B cell (primary cell): ENCODE measurements at regions of chr12 and their contacts with region 1.

Region 1: DNA sequence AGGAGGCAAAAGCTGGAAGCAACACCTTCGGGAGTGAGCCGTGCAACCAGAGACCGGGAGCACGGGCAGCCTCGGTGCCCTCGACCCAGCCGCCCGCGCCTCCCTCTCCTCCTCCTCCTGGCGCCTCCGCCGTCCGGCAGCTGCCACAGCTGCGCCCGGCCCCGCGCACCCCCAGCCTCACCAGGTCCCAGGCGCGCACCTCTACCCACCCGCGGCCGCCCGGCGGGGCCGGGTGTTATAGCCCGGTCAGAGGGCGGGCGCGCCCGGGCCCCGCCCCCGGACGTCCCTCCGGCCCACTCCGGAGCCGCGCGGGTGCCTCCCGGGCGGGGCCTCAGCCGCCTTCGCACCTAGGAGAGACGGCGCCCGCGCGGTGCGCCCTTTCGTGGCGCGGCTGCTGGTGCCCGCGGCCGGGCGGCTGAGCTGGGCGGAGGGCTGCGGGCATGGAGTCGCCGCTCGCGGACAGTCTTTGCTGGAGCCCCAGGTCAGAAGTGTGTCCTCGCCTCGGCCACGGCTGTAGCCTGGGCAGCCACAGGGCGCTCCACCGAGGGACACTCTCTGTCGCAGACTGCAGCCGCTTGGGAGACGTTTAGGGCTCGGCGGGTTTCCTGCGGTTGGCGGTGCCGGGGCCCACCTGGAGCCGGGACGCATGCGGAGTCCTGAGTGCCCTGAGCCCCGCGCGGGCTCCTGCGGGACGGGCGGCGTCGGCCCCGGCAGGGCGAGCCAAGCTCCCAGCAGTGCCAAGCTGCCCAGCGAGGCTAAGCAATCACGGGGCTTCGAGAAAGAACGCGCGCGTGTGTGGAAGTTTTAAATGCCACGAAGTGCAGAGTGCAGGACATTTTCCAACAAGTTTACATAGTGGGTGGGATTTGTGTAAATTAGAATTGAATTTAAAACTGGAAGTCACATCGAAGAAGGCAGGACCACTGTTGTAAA is at the start of gene CPM:
- DNase-seq: peak; percentile 81
- ATAC-seq: peak; percentile 98
- H3K4me3 ChIP-seq: peak within 1 kb of the TSS; percentile 66 to 95 (median 72)
- H3K4me3 Mint-ChIP-seq: peak within 1 kb of the TSS; percentile 95
- H3K27ac ChIP-seq: peak within 1 kb of the TSS in 1 of 2 donors; percentile 18
- H3K27ac Mint-ChIP-seq: peak within 1 kb of the TSS; percentile 56
- H3K4me1 ChIP-seq: peaks cover 11 to 16% of the 10 kb centered on the region in 2 donors
- H3K4me1 Mint-ChIP-seq: peaks cover 10% of the 10 kb centered on the region
- H3K27me3 ChIP-seq: peaks cover 0 to 5% (median 2%) of the 10 kb centered on the region in 4 experiments
- H3K27me3 Mint-ChIP-seq: no peaks in the 10 kb centered on the region
- CTCF ChIP-seq: no peak
- total RNA-seq, gene CPM: 5.0 and 6.4 TPM in 2 replicates

Region 2: GRCh38 chr12:67268896-67269631 is 1664.2 kb before region 1 on chr12 and contains the start of gene CAND1:
- CTCF ChIA-PET with region 1: no interaction called
- POLR2A ChIA-PET with region 1: no interaction called
- intact Hi-C with region 1: loop called (anchors 2 kb)
- DNase-seq: peak; percentile 99
- ATAC-seq: peak; percentile 78
- H3K4me3 ChIP-seq: peak within 1 kb of the TSS; percentile 67 to 94 (median 80)
- H3K4me3 Mint-ChIP-seq: peak within 1 kb of the TSS; percentile 86
- H3K27ac ChIP-seq: peak within 1 kb of the TSS; percentile 90 to 94
- H3K27ac Mint-ChIP-seq: peak within 1 kb of the TSS; percentile 91
- H3K4me1 ChIP-seq: peaks cover 24 to 25% of the 10 kb centered on the region in 2 donors
- H3K4me1 Mint-ChIP-seq: peaks cover 34% of the 10 kb centered on the region
- H3K27me3 ChIP-seq: no peaks in the 10 kb centered on the region
- H3K27me3 Mint-ChIP-seq: no peaks in the 10 kb centered on the region
- CTCF ChIP-seq: no peak
- total RNA-seq, gene CAND1: 108 and 110 TPM in 2 replicates

Region 3: DNA sequence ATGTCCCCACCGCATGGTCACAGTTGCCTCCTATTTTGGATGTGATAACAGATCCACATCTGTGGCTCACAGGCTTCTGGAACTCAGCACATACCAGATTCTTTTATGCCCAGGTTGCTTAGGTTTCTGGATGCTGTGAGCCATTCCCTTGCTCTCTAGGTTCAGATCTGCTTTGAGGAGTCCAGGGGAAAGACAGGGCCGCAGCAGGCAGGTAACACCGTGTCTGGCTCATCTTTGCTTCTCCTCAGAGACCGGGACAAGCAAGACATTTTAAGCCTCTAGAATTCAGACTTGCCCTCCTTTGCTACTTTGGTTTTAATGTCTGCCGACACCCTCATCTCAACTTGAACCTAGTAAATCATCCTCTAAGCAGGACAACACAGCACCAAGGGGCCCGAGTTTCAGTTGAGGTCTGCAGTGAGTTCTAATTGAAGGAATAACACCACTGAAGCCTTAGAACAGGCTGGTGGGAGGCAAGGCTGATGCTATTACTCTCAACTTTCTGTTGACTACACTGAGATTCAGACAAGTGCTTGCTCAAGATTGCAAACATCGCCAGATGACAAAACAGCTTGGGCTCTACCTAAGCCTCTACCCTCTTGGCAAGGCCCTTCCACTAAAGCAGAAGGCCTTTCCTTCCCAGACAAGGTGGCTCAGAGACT is 70.0 kb before region 1 on chr12:
- CTCF ChIA-PET with region 1: no interaction called
- POLR2A ChIA-PET with region 1: no interaction called
- intact Hi-C with region 1: loop called (anchors 1 kb)
- DNase-seq: peak; percentile 8
- ATAC-seq: no peak
- H3K4me3 ChIP-seq: no peak overlapping the region
- H3K4me3 Mint-ChIP-seq: no peak overlapping the region
- H3K27ac ChIP-seq: no peak overlapping the region
- H3K27ac Mint-ChIP-seq: no peak overlapping the region
- H3K4me1 ChIP-seq: peaks cover 0 to 6% of the 10 kb centered on the region in 2 donors
- H3K4me1 Mint-ChIP-seq: peaks cover 14% of the 10 kb centered on the region
- H3K27me3 ChIP-seq: no peaks in the 10 kb centered on the region
- H3K27me3 Mint-ChIP-seq: no peaks in the 10 kb centered on the region
- CTCF ChIP-seq: no peak

Region 4: GRCh38 chr12:68904351-68904962 is 28.8 kb before region 1 on chr12:
- CTCF ChIA-PET with region 1: no interaction called
- POLR2A ChIA-PET with region 1: no interaction called
- intact Hi-C with region 1: loop called (anchors 1 kb)
- DNase-seq: peak; percentile 64
- ATAC-seq: peak; percentile 95
- H3K4me3 ChIP-seq: peak overlapping the region in 1 of 5 experiments; percentile 12
- H3K4me3 Mint-ChIP-seq: peak overlapping the region; percentile 63
- H3K27ac ChIP-seq: peak overlapping the region; percentile 25 to 33
- H3K27ac Mint-ChIP-seq: peak overlapping the region; percentile 15
- H3K4me1 ChIP-seq: peaks cover 30 to 33% of the 10 kb centered on the region in 2 donors
- H3K4me1 Mint-ChIP-seq: peaks cover 46% of the 10 kb centered on the region
- H3K27me3 ChIP-seq: no peaks in the 10 kb centered on the region
- H3K27me3 Mint-ChIP-seq: no peaks in the 10 kb centered on the region
- CTCF ChIP-seq: no peak

Region 5: GRCh38 chr12:69585189-69586062 is 652.2 kb after region 1 on chr12 and contains the start of gene CCT2:
- CTCF ChIA-PET with region 1: no interaction called
- POLR2A ChIA-PET with region 1: no interaction called
- intact Hi-C with region 1: loop called (anchors 2 kb)
- DNase-seq: peak; percentile 98
- ATAC-seq: peak; percentile 93
- H3K4me3 ChIP-seq: peak within 1 kb of the TSS; percentile 83 to 96 (median 90)
- H3K4me3 Mint-ChIP-seq: peak within 1 kb of the TSS; percentile 97
- H3K27ac ChIP-seq: peak within 1 kb of the TSS; percentile 91 to 97
- H3K27ac Mint-ChIP-seq: peak within 1 kb of the TSS; percentile 96
- H3K4me1 ChIP-seq: peaks cover 6 to 11% of the 10 kb centered on the region in 2 donors
- H3K4me1 Mint-ChIP-seq: peaks cover 12% of the 10 kb centered on the region
- H3K27me3 ChIP-seq: no peaks in the 10 kb centered on the region
- H3K27me3 Mint-ChIP-seq: no peaks in the 10 kb centered on the region
- CTCF ChIP-seq: peak; percentile 60
- total RNA-seq, gene CCT2: 125 TPM in 2 replicates